Activated T-helper 1 cell treated with anti-CD3 and anti-CD28 coated beads, Interleukin-12 subunit alpha, Interleukin-12 subunit beta, Interleukin-2, Interleukin-4 antibody, amounts not matched to agents 30 ng/mL and 10 ng/mL and 1 ng/mL, durations not matched to agents 14 hours and 24 hours and 36 hours (primary cell): ENCODE measurements at regions of chr1 and their contacts with region 1.

Region 1: DNA sequence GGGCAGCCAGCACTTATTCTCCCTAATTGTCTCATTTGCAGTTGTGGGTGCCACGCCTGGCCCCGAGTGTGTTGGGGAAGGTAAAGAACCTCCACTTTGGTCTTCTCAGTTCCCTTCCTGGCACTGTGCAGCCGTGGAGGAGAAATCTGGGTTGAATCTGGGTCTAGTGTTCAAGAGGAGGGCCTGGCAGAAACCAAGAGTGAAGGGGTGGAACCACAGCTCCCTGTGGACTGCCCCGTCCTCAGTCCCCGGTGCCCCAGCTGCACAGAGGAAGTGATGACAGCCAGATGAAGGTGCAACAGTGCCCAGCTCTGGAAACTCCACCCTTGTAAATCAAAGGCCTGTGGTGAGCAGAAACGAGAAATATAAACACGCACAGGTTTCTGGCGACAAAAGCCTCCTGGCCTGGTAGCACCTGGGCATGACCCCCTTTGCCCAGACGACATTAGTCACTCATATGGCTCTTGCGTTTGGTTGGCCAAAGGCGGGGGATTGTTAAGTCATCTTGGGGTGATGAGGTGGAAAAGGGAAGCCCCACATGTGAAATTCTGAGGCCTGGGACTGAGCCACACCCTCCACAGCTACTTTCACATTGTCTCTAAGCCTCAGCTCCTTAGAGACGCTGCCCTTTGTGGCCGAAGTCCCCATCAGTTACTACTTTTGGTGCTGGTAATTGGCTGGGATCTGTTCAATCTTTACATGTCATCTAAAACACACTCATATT is 4.2 kb upstream of the ECE1 start:
- DNase-seq: peak; percentile 79
- H3K4me3 Mint-ChIP-seq: peak overlapping the region; percentile 76
- H3K27ac Mint-ChIP-seq: peak overlapping the region; percentile 95
- H3K4me1 Mint-ChIP-seq: peaks cover 80% of the 10 kb centered on the region
- H3K27me3 Mint-ChIP-seq: no peaks in the 10 kb centered on the region

Region 2: DNA sequence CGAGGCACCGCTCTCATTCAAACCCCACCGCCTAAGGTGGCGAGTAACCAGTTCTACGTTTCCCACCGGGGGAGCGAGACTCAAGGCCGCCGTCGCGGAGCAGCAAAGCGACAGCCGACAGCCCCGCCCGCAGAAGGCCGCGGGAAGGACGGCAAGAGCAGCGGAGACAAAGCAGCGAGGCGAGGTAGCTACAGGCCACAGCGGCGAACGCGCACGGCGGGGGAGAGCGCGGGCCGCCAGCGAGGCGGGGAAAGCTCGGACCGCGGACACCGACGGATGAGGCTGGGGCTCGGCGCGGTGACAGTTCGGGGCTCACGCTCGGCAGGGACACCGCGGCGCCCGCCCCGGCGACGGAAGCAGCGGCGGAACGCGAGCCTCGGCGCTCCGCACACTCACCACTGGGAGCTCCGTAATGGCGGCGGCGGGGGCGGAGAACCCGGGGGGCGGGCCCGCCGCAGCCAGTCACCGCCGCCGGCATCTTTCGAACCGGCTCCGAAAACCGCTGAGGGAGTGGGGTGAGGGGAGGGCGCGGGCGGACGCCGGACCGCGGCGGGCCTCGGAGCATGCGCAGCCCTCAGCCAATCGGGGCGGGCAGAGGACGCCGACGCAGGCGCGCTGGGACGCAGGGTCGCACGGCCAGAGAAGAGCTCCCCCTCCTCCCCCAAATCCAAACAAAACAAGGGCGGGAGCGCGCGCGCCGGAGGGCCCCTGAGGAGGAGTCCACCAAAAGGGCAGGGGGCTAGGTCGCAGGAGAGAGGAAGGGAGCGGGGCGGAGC is 508.0 kb before region 1 on chr1:
- intact Hi-C with region 1: loop called (anchors 5 kb)
- DNase-seq: peak; percentile 95
- H3K4me3 Mint-ChIP-seq: peak overlapping the region; percentile 91
- H3K27ac Mint-ChIP-seq: peak overlapping the region; percentile 97
- H3K4me1 Mint-ChIP-seq: peaks cover 26% of the 10 kb centered on the region
- H3K27me3 Mint-ChIP-seq: peaks cover 5% of the 10 kb centered on the region

Region 3: GRCh38 chr1:21176586-21177555 is 117.6 kb before region 1 on chr1 and contains the start of gene EIF4G3:
- intact Hi-C with region 1: loop called (anchors 5 kb)
- DNase-seq: peak; percentile 99
- H3K4me3 Mint-ChIP-seq: peak within 1 kb of the TSS; percentile 89
- H3K27ac Mint-ChIP-seq: peak within 1 kb of the TSS; percentile 94
- H3K4me1 Mint-ChIP-seq: peaks cover 25% of the 10 kb centered on the region
- H3K27me3 Mint-ChIP-seq: no peaks in the 10 kb centered on the region
- total RNA-seq, gene EIF4G3: 67.5 and 69.3 TPM in 2 replicates

Region 4: GRCh38 chr1:21270086-21270689 is 24.2 kb before region 1 on chr1:
- intact Hi-C with region 1: loop called (anchors 1 kb)
- DNase-seq: peak; percentile 72
- H3K4me3 Mint-ChIP-seq: no peak overlapping the region
- H3K27ac Mint-ChIP-seq: peak overlapping the region; percentile 19
- H3K4me1 Mint-ChIP-seq: peaks cover 18% of the 10 kb centered on the region
- H3K27me3 Mint-ChIP-seq: no peaks in the 10 kb centered on the region

Region 5: GRCh38 chr1:21324368-21325141 is 30.1 kb after region 1 on chr1:
- intact Hi-C with region 1: loop called (anchors 1 kb)
- DNase-seq: peak; percentile 40
- H3K4me3 Mint-ChIP-seq: peak overlapping the region; percentile 71
- H3K27ac Mint-ChIP-seq: peak overlapping the region; percentile 95
- H3K4me1 Mint-ChIP-seq: peaks cover 68% of the 10 kb centered on the region
- H3K27me3 Mint-ChIP-seq: peaks cover 2% of the 10 kb centered on the region

Region 6: DNA sequence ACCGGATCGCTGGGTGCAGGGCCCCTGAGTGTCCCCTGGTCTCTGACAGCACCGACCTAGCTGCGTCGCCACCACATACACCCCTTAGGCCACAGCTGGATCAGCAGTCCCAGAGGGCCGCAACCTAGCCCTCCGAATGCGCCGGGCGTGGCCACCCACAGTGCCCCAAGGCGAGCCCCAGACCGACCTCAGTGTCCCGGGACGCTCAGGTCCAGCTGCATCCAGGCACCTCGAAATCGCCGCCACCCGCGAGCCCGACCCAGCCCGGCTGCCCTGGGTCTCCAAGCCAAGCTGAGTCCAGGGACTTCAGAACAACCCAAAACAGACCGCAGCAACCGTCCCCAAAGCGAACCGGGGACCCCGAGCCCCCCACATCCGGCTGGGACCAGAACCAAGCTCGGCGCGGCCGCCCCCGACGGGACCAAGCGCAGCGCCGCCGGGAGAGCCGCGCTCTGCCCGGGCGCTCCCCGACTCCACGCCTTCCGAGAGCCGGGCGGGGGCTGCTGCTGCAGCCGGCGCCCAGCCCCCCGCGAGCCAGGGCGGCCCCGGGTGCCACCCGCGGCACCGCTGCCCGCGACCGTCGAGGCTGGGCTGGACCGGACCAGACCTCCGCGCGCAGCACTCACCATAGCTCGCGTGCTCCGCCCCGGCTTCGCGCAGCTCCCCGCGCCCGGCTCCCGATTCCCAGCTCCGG is 50.5 kb after region 1 on chr1:
- intact Hi-C with region 1: loop called (anchors 1 kb)
- DNase-seq: no peak
- H3K4me3 Mint-ChIP-seq: peak overlapping the region; percentile 97
- H3K27ac Mint-ChIP-seq: peak overlapping the region; percentile 76
- H3K4me1 Mint-ChIP-seq: peaks cover 37% of the 10 kb centered on the region
- H3K27me3 Mint-ChIP-seq: no peaks in the 10 kb centered on the region

Region 7: GRCh38 chr1:22025368-22026155 is 731.1 kb after region 1 on chr1:
- intact Hi-C with region 1: loop called (anchors 5 kb)
- DNase-seq: peak; percentile 90
- H3K4me3 Mint-ChIP-seq: peak overlapping the region; percentile 99
- H3K27ac Mint-ChIP-seq: peak overlapping the region; percentile 100
- H3K4me1 Mint-ChIP-seq: peaks cover 55% of the 10 kb centered on the region
- H3K27me3 Mint-ChIP-seq: no peaks in the 10 kb centered on the region